ENCODE measurements at regions of chr6 and their contacts with region 1.

Region 1: GRCh38 chr6:30914076-30914853 is at the start of gene VARS2:
- DNase-seq: peak; percentile 71
- H3K4me3 ChIP-seq: peak within 1 kb of the TSS; percentile 63
- H3K27ac ChIP-seq: peak within 1 kb of the TSS; percentile 68
- H3K27me3 ChIP-seq: no peaks in the 10 kb centered on the region
- CTCF ChIP-seq: peak; percentile 40
- polyA plus RNA-seq, gene VARS2: 10.3 and 12.2 TPM in 2 replicates

Region 2: DNA sequence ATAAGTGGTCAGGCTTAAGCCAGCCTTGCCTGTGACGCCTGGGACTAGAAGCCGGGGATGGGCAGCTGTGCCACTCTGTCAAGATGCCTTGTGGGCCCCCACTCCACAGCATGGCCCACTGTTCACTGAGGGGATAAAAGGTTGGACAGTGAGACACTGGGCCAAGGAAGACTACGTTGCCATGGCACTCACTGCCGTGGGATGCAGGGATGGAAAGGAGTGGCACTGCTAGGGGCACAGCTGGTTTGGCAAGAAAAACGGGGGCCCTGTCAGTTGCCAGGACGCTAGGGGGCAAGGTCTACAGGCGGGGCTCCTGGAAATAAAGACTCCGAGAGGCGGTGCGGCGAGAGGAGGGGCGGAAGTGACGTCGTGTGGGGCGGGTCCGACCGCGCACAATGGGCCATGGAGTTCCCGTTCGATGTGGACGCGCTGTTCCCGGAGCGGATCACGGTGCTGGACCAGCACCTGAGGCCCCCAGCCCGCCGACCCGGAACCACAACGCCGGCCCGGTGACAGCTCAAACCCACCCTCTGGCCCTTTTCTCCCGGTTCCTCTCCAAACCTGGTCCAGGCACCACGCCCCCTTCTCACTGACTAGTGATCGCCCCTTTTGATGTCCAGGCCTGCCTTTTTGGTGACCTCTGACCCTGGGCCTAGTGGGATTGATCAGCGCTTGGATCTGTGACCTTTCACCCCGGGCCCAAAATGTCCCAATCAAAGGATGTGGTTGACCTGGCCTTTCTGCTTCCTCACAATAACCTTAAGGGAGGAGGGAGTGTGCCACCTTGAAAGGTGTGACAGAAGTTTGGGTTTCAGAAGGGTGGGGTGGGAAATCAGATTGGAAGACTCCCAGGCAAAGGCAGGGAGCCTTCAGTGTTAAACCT is 287.5 kb before region 1 on chr6 and contains the start of gene ATAT1:
- CTCF ChIA-PET with region 1: no interaction called
- POLR2A ChIA-PET with region 1: no interaction called
- DNase-seq: no peak
- H3K4me3 ChIP-seq: peak within 1 kb of the TSS; percentile 82
- H3K27ac ChIP-seq: peak within 1 kb of the TSS; percentile 75
- H3K27me3 ChIP-seq: no peaks in the 10 kb centered on the region
- CTCF ChIP-seq: peak; percentile 48
- polyA plus RNA-seq, gene ATAT1: 10.8 and 13.1 TPM in 2 replicates

Region 3: DNA sequence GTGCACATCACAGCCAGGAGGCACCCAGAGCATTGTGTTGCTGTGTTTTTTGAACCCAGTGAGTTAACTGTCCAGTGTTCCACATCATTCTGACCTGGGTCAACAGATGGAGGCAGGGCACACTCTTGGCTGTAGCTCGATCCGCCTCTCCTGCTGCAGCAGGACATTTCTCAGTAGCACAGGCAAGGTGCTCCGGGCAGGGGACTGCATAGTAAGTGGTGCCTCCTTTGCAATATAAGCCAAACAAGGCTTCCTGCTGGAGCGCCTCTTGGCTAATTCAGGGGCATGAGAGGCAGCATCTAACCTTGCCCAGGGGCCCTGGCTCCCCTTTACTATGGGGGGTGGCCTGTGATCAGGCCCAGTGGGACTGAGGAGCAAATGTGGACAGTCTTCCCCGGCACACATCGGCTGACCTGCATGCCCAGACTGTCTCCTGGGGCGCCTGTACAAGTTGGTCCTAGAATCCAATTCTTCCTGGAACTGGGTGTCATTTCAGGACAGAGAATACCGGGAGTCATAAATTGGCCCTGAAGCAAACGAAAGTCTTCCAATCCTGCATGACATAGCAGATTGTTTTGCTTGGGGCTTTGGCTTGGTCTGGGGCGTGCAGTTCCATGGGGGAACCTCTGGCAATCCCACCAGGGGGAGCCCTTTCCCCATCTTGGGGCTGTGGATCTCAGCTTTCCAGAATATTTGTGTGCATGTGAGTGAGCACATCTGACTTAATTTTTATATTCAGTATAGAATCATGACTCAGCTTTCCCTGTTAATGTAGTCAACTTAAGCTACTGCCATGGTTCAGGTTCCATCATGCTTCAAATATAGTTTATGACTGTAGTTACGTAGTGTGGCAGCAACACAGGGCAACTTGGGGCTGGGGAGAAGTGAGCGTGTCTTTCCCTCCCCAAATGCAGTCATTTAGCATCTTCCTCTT is 86.0 kb before region 1 on chr6:
- CTCF ChIA-PET with region 1: interaction called, 101 read pairs
- POLR2A ChIA-PET with region 1: no interaction called
- DNase-seq: peak; percentile 84
- H3K4me3 ChIP-seq: no peak overlapping the region
- H3K27ac ChIP-seq: peak overlapping the region; percentile 78
- H3K27me3 ChIP-seq: no peaks in the 10 kb centered on the region
- CTCF ChIP-seq: peak; percentile 97

Region 4: DNA sequence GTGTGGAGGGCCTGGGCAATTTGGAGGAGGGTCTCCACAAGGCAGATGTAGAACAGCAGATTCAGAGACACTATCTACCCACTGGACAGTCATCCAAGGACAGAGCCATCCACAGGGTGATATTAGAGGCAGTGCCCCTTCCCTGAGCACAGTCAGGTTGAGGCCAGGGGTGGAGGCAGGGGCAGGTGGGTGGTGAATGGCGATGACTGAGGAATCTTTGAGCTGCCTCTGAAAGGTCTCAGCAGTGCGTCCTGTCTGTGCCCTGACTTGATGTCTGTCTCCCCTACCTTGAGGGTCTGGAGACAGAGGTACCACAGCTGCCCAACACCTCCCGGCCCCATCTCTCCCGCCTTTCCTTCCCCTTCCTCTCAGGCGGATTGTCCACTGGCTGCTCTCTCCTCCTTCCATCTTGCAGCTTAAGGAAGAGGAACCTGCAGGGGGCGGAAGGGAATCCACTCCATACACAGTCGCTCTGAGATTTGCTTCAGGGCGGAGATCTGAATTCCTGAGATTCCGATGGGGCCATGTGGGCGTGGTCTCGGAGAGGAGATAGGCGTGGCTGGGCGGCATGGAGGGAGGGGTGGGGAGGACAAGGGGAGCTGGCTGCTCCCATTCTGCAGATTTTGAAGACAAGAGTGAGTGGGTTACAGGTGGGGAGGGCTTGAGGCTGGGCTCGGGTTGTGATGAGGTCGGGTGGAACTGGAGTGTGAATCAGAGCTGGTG is 28.2 kb after region 1 on chr6:
- CTCF ChIA-PET with region 1: interaction called, 10 read pairs
- POLR2A ChIA-PET with region 1: interaction called, 4 read pairs
- DNase-seq: peak; percentile 44
- H3K4me3 ChIP-seq: 0 out of 2 replicates have a peak overlapping the region, but pooled peaks have one; percentile 5
- H3K27ac ChIP-seq: no peak overlapping the region
- H3K27me3 ChIP-seq: peaks cover 51% of the 10 kb centered on the region
- CTCF ChIP-seq: peak; percentile 78

Region 5: DNA sequence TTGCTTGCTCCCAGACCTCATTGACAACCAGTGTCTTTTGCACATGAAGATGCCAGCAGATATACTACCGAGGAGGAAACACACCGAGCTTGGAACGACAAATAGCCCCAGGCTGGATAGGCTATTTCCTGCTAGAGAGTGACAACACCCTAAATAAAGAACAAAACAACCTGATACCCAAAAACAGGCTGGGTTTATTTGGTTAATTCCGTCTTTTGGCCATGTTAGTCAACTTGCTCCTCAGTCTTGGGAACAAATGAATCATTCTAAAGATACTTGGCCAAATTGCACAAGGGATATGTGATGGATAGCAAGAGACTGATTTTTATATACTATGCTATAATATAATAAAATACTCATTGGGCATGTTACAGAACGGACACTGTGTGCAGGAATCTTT is 84.5 kb after region 1 on chr6:
- CTCF ChIA-PET with region 1: no interaction called
- POLR2A ChIA-PET with region 1: no interaction called
- DNase-seq: no peak
- H3K4me3 ChIP-seq: no peak overlapping the region
- H3K27ac ChIP-seq: no peak overlapping the region
- H3K27me3 ChIP-seq: peaks cover 3% of the 10 kb centered on the region
- CTCF ChIP-seq: no peak

Region 6: GRCh38 chr6:31068669-31069340 is 154.5 kb after region 1 on chr6:
- CTCF ChIA-PET with region 1: interaction called, 261 read pairs
- POLR2A ChIA-PET with region 1: interaction called, 6 read pairs
- DNase-seq: peak; percentile 52
- H3K4me3 ChIP-seq: no peak overlapping the region
- H3K27ac ChIP-seq: no peak overlapping the region
- H3K27me3 ChIP-seq: peaks cover 4% of the 10 kb centered on the region
- CTCF ChIP-seq: peak; percentile 96

Region 7: DNA sequence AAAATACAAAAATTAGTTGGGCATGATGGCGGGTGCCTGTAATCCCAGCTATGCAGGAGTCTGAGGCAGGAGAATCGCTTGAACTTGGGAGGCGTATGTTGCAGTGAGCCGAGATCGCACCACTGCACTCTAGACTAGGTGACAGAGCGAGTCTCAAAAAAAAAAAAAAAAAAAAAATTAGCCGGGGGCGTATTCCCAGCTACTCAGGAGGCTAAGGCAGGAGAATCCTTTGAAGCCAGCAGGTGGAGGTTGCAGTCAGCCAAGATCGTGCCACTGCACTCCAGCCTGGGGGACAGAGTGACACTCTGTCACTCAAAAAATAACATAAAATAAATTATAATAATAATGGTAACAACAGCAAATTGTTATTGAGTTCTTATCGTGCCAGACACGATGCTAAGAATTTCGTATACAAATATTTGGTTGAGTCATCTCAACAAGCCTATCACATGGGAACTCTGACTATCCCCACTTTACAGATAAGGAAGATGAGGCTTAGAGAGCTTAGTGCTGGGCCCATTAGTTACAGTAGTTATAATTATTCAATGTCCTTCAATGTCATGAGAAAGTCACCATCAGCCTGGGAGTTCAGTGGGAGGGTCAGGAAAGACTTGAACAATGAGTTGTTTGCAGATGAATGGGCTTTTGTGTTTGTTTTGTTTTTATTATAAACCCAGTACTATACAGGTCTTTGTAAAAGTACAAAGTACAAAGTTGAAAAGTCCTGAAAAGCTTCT is 178.7 kb after region 1 on chr6:
- CTCF ChIA-PET with region 1: interaction called, 183 read pairs
- POLR2A ChIA-PET with region 1: interaction called, 6 read pairs
- DNase-seq: no peak
- H3K4me3 ChIP-seq: no peak overlapping the region
- H3K27ac ChIP-seq: no peak overlapping the region
- H3K27me3 ChIP-seq: peaks cover 4% of the 10 kb centered on the region
- CTCF ChIP-seq: no peak